Activated B cell treated with CpG ODN at 0.5 μM for 24 hours (primary cell): ENCODE measurements at regions of chr19 and their contacts with region 1.

Region 1: GRCh38 chr19:37931881-37932655 is 25.1 kb downstream of the SIPA1L3 start:
- DNase-seq: peak; percentile 52
- ATAC-seq: peak; percentile 30
- H3K4me3 Mint-ChIP-seq: peak overlapping the region; percentile 83
- H3K27ac Mint-ChIP-seq: peak overlapping the region; percentile 92
- H3K4me1 Mint-ChIP-seq: peaks cover 94% of the 10 kb centered on the region
- H3K27me3 Mint-ChIP-seq: no peaks in the 10 kb centered on the region
- CTCF ChIP-seq: no peak

Region 2: GRCh38 chr19:37914908-37915307 is 17.2 kb before region 1 on chr19:
- CTCF ChIA-PET with region 1: interaction called, 3 read pairs
- POLR2A ChIA-PET with region 1: interaction called, 43 read pairs
- intact Hi-C with region 1: loop called (anchors 2 kb)
- DNase-seq: peak; percentile 34
- ATAC-seq: peak; percentile 64
- H3K4me3 Mint-ChIP-seq: peak overlapping the region; percentile 19
- H3K27ac Mint-ChIP-seq: peak overlapping the region; percentile 83
- H3K4me1 Mint-ChIP-seq: peaks cover 87% of the 10 kb centered on the region
- H3K27me3 Mint-ChIP-seq: no peaks in the 10 kb centered on the region
- CTCF ChIP-seq: no peak

Region 3: DNA sequence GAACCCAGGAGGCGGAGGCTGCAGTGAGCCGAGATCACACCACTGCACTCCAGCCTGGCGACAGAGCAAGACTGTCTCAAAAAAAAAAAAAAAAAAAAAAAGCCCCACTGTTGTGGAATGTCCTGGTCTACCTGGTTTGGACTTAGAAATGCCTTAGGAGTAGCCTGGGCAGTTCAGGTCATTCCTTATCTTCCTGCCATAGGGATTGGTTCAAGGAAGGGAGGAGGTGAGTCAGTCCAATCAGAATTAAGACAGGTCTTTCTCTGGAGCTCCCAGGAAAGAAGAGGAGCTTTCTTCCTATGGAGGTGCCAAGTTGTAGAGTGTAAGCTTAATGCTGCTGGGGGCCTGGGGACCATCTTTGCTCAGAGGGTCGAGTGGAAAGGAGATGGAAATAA is 19.7 kb after region 1 on chr19:
- CTCF ChIA-PET with region 1: interaction called, 6 read pairs
- POLR2A ChIA-PET with region 1: interaction called, 7 read pairs
- intact Hi-C with region 1: loop called (anchors 2 kb)
- DNase-seq: no peak
- ATAC-seq: no peak
- H3K4me3 Mint-ChIP-seq: peak overlapping the region; percentile 72
- H3K27ac Mint-ChIP-seq: peak overlapping the region; percentile 90
- H3K4me1 Mint-ChIP-seq: peaks cover 86% of the 10 kb centered on the region
- H3K27me3 Mint-ChIP-seq: no peaks in the 10 kb centered on the region
- CTCF ChIP-seq: no peak

Region 4: GRCh38 chr19:37963190-37963936 is 31.3 kb after region 1 on chr19:
- CTCF ChIA-PET with region 1: no interaction called
- POLR2A ChIA-PET with region 1: interaction called, 12 read pairs
- intact Hi-C with region 1: loop called (anchors 5 kb)
- DNase-seq: no peak
- ATAC-seq: no peak
- H3K4me3 Mint-ChIP-seq: peak overlapping the region; percentile 4
- H3K27ac Mint-ChIP-seq: peak overlapping the region; percentile 88
- H3K4me1 Mint-ChIP-seq: peaks cover 80% of the 10 kb centered on the region
- H3K27me3 Mint-ChIP-seq: no peaks in the 10 kb centered on the region
- CTCF ChIP-seq: no peak

Region 5: GRCh38 chr19:37979547-37980082 is 47.5 kb after region 1 on chr19:
- CTCF ChIA-PET with region 1: interaction called, 5 read pairs
- POLR2A ChIA-PET with region 1: interaction called, 38 read pairs
- intact Hi-C with region 1: loop called (anchors 1 kb)
- DNase-seq: no peak
- ATAC-seq: peak; percentile 3
- H3K4me3 Mint-ChIP-seq: peak overlapping the region; percentile 60
- H3K27ac Mint-ChIP-seq: peak overlapping the region; percentile 90
- H3K4me1 Mint-ChIP-seq: peaks cover 95% of the 10 kb centered on the region
- H3K27me3 Mint-ChIP-seq: no peaks in the 10 kb centered on the region
- CTCF ChIP-seq: no peak

Region 6: GRCh38 chr19:38004521-38005223 is 72.6 kb after region 1 on chr19:
- CTCF ChIA-PET with region 1: interaction called, 3 read pairs
- POLR2A ChIA-PET with region 1: interaction called, 24 read pairs
- intact Hi-C with region 1: loop called (anchors 1 kb)
- DNase-seq: peak; percentile 34
- ATAC-seq: peak; percentile 60
- H3K4me3 Mint-ChIP-seq: no peak overlapping the region
- H3K27ac Mint-ChIP-seq: no peak overlapping the region
- H3K4me1 Mint-ChIP-seq: peaks cover 39% of the 10 kb centered on the region
- H3K27me3 Mint-ChIP-seq: no peaks in the 10 kb centered on the region
- CTCF ChIP-seq: no peak